ENCODE measurements at regions of chr6 and their contacts with region 1.

Region 1: GRCh38 chr6:163554663-163555062 is 140.1 kb downstream of the QKI start:
- DNase-seq: peak; percentile 47 to 71 (median 54)
- ATAC-seq: peak; percentile 91
- H3K4me3 ChIP-seq: no peak overlapping the region
- H3K27ac ChIP-seq: no peak overlapping the region
- H3K4me1 ChIP-seq: no peaks in the 10 kb centered on the region
- H3K27me3 ChIP-seq: no peaks in the 10 kb centered on the region
- CTCF ChIP-seq: peak; percentile 73 to 78 (median 73)
- EP300 ChIP-seq: no peak
- POLR2A ChIP-seq: no peak
- RAD21 ChIP-seq: peak; percentile 58 to 83

Region 2: GRCh38 chr6:163170294-163170883 is 384.3 kb before region 1 on chr6:
- CTCF ChIA-PET with region 1: no interaction called
- POLR2A ChIA-PET with region 1: no interaction called
- in situ Hi-C with region 1: loop called (anchors 5 kb)
- intact Hi-C with region 1: no loop called
- DNase-seq: peak; percentile 65 to 88 (median 79)
- ATAC-seq: peak; percentile 96
- H3K4me3 ChIP-seq: no peak overlapping the region
- H3K27ac ChIP-seq: no peak overlapping the region
- H3K4me1 ChIP-seq: no peaks in the 10 kb centered on the region
- H3K27me3 ChIP-seq: peaks cover 0 to 8% of the 10 kb centered on the region in 2 experiments; a peak in 1 of 5 replicates
- CTCF ChIP-seq: peak; percentile 72 to 94 (median 76)
- EP300 ChIP-seq: no peak
- POLR2A ChIP-seq: no peak
- RAD21 ChIP-seq: peak; percentile 32 to 61; a peak in 2 of 4 replicates